GM12878 (cell line): ENCODE measurements at regions of chr10 and their contacts with region 1.

Region 1: DNA sequence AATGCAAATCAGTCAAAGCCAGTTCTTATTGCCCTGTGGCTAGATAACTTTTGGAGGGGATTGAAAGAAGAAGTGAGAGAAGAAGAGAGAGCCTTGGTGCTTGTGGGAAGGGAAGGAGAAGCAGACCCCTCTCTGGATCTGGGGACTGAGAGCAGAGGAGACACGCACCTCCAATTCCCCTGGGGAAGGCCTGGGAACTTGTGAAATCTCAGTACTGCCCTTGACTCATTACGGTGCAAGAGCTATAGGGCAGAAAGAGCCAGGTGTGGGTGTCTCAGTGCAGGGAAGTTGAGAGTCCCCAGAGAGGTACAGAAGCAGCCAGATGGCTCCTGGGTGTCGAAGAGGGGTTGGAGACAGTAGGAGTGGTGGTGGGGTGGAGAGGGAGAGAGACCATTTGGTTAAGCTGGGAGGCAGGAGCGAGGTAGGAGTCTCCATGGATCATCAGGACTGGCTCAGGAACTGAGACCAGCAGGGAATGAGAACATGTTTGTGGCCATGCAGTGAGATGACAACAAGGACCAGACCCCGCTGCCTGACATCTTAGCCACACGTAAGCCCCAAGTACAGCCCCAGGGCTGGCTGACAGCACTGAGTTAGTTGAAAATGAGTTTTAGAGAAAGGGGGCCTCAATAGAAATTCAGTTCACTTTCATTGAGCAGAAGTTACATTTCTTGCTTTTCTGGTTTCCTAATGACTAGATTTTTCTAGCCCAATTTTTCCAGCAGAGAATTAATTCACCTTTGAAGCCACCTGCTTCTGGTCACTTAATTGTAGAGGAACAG is 238.2 kb downstream of the BUB3 start:
- DNase-seq: peak; percentile 99
- ATAC-seq: peak; percentile 84
- H3K4me3 ChIP-seq: peak overlapping the region; percentile 48; the same call in 1 of the 2 replicates
- H3K27ac ChIP-seq: peak overlapping the region; percentile 99
- H3K4me1 ChIP-seq: peaks cover 73% of the 10 kb centered on the region
- H3K27me3 ChIP-seq: no peaks in the 10 kb centered on the region
- CTCF ChIP-seq: no peak
- EP300 ChIP-seq: peak; percentile 96
- POLR2A ChIP-seq: peak; percentile 74
- RAD21 ChIP-seq: peak; percentile 22; the same call in 1 of the 2 replicates

Region 2: DNA sequence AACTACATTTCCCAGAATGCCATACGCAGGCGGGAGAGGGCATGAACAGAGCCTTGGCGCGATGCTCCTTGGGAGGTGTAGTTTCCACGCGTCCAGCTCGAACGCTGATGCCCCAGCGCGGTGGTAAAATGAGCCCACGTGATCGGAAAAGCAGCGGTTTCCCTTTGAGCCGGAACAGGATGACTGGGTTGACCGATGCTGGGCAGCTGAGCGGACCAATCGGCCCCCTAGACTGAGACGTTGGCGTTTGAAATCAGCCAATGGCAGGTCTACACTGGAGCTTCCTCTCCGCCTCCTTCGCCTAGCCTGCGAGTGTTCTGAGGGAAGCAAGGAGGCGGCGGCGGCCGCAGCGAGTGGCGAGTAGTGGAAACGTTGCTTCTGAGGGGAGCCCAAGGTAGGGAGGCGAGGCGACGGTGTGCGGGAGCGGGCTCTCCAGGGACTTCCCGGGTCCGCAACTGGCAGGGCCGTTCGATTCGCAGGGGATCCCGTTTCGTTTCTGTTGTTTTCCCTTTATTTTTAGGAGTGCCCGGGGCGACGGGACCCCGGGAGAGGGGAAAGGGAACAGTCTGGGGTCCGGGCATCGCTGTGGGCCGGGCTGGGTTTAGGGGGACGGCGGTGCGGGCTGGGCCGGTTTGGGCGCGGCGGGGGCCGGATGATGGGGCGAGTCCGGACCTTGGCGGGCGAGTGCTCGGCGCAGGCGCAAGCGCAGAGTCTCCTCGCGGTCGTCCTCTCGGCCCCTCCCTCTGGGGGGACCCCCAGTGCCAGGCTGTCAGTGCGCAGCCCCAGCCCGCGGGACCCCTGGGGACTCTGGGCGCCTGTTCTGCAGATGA is 238.1 kb before region 1 on chr10 and contains the start of gene BUB3:
- CTCF ChIA-PET with region 1: interaction called, 3 read pairs
- POLR2A ChIA-PET with region 1: interaction called, 3 read pairs
- RAD21 ChIA-PET with region 1: interaction called, 8 read pairs
- SMC1A ChIA-PET with region 1: interaction called, 6 read pairs
- in situ Hi-C with region 1: loop called (anchors 5 kb)
- intact Hi-C with region 1: loop called (anchors 5 kb)
- DNase-seq: peak; percentile 99
- ATAC-seq: peak; percentile 96
- H3K4me3 ChIP-seq: peak within 1 kb of the TSS; percentile 93
- H3K27ac ChIP-seq: peak within 1 kb of the TSS; percentile 98
- H3K4me1 ChIP-seq: peaks cover 21% of the 10 kb centered on the region
- H3K27me3 ChIP-seq: no peaks in the 10 kb centered on the region
- CTCF ChIP-seq: no peak
- EP300 ChIP-seq: no peak
- POLR2A ChIP-seq: peak; percentile 98
- RAD21 ChIP-seq: no peak
- polyA plus RNA-seq, gene BUB3: 648 to 1,126 TPM

Region 3: GRCh38 chr10:123367195-123367594 is 25.2 kb before region 1 on chr10:
- CTCF ChIA-PET with region 1: no interaction called
- POLR2A ChIA-PET with region 1: no interaction called
- RAD21 ChIA-PET with region 1: no interaction called
- SMC1A ChIA-PET with region 1: no interaction called
- in situ Hi-C with region 1: no loop called
- intact Hi-C with region 1: no loop called
- DNase-seq: no peak
- ATAC-seq: no peak
- H3K4me3 ChIP-seq: no peak overlapping the region
- H3K27ac ChIP-seq: no peak overlapping the region
- H3K4me1 ChIP-seq: no peaks in the 10 kb centered on the region
- H3K27me3 ChIP-seq: no peaks in the 10 kb centered on the region
- CTCF ChIP-seq: no peak
- EP300 ChIP-seq: no peak
- POLR2A ChIP-seq: no peak
- RAD21 ChIP-seq: no peak

Region 4: DNA sequence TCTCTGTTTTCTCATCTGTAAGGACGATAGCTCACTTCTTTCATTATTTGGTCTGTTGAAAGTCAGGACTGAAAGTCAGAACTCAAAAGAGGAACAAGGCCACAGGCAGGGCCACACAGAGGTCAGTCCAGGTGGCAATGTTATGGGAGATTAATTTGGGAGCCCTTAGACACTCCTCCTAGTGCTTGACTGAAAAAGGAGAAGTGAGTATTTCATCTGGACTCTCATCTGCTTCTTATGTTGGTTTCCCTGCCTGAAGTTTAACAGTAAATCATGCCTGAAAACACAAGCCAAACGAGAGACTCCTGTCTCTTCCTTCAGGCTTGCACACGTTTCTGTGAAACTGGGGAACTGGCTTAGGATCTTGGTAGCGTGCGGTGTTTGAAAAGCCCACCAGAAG is 10.3 kb after region 1 on chr10:
- CTCF ChIA-PET with region 1: interaction called, 13 read pairs
- POLR2A ChIA-PET with region 1: interaction called, 12 read pairs
- RAD21 ChIA-PET with region 1: interaction called, 29 read pairs
- SMC1A ChIA-PET with region 1: interaction called, 43 read pairs
- in situ Hi-C with region 1: no loop called
- intact Hi-C with region 1: loop called (anchors 1 kb)
- DNase-seq: peak; percentile 97
- ATAC-seq: peak; percentile 80
- H3K4me3 ChIP-seq: peak overlapping the region; percentile 18; the same call in 1 of the 2 replicates
- H3K27ac ChIP-seq: peak overlapping the region; percentile 97
- H3K4me1 ChIP-seq: peaks cover 56% of the 10 kb centered on the region
- H3K27me3 ChIP-seq: no peaks in the 10 kb centered on the region
- CTCF ChIP-seq: no peak
- EP300 ChIP-seq: peak; percentile 91 to 94
- POLR2A ChIP-seq: peak; percentile 55
- RAD21 ChIP-seq: peak; percentile 30

Region 5: GRCh38 chr10:123502983-123503382 is 110.6 kb after region 1 on chr10:
- CTCF ChIA-PET with region 1: no interaction called
- POLR2A ChIA-PET with region 1: no interaction called
- RAD21 ChIA-PET with region 1: no interaction called
- SMC1A ChIA-PET with region 1: no interaction called
- in situ Hi-C with region 1: no loop called
- intact Hi-C with region 1: loop called (anchors 2 kb)
- DNase-seq: no peak
- ATAC-seq: peak; percentile 58; the same call in 2 of the 3 replicates
- H3K4me3 ChIP-seq: no peak overlapping the region
- H3K27ac ChIP-seq: no peak overlapping the region
- H3K4me1 ChIP-seq: peaks cover 36% of the 10 kb centered on the region
- H3K27me3 ChIP-seq: no peaks in the 10 kb centered on the region
- CTCF ChIP-seq: peak; percentile 37 to 52 (median 47); a peak in 5 of 6 replicates
- EP300 ChIP-seq: no peak
- POLR2A ChIP-seq: no peak
- RAD21 ChIP-seq: peak; percentile 86

Region 6: DNA sequence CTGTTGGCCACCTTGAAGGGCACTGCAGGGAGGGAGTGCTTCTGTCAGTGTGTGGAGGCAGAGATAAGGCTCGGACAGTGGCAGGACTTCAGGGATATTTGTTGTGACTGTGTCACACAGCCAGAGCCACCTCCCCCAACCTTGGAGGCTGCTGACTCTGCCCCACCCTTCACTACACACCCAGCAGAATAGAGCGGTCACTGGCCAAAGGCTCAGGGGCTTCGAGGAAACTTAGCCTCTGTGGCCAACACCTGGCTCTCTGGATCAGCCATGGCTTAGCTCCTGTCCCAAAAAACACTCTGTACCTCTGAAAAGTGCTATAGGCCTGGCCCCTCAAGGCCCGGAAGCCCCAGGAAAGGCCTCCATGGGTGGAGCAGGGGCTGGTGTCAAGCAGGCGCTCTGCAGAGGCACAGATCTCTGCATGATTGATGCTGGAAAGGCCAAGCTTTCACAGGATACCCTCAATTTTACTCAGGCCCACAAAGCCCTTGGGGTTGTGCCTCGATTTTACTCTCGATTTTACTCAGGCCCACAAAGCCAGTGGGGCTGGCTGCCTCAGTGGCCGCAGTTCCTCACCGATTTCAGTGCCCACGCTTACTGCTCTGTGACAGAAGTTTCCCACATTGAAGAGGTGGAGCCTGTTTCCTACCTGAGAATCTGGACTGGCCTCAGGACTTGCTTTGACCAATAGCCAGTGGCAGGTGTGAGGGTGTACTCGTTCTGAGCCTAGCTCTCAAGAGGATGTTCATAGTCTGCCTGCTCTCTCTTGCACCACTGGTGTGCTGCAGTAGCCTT is 160.6 kb after region 1 on chr10:
- CTCF ChIA-PET with region 1: interaction called, 4 read pairs
- POLR2A ChIA-PET with region 1: interaction called, 3 read pairs
- RAD21 ChIA-PET with region 1: interaction called, 16 read pairs
- SMC1A ChIA-PET with region 1: interaction called, 16 read pairs
- in situ Hi-C with region 1: loop called (anchors 5 kb)
- intact Hi-C with region 1: loop called (anchors 1 kb)
- DNase-seq: peak; percentile 81
- ATAC-seq: peak; percentile 84
- H3K4me3 ChIP-seq: 0 out of 2 replicates have a peak overlapping the region, but pooled peaks have one; percentile 2
- H3K27ac ChIP-seq: peak overlapping the region; percentile 85
- H3K4me1 ChIP-seq: peaks cover 74% of the 10 kb centered on the region
- H3K27me3 ChIP-seq: no peaks in the 10 kb centered on the region
- CTCF ChIP-seq: no peak
- EP300 ChIP-seq: peak; percentile 42 to 51; a peak in 2 of 4 replicates
- POLR2A ChIP-seq: 0 out of 2 replicates have a peak, but pooled peaks have one; percentile 38
- RAD21 ChIP-seq: no peak